ENCODE measurements at regions of chr3 and their contacts with region 1.

Region 1: GRCh38 chr3:190205739-190206138 is 85.0 kb upstream of the P3H2 start:
- DNase-seq: no peak

Region 2: DNA sequence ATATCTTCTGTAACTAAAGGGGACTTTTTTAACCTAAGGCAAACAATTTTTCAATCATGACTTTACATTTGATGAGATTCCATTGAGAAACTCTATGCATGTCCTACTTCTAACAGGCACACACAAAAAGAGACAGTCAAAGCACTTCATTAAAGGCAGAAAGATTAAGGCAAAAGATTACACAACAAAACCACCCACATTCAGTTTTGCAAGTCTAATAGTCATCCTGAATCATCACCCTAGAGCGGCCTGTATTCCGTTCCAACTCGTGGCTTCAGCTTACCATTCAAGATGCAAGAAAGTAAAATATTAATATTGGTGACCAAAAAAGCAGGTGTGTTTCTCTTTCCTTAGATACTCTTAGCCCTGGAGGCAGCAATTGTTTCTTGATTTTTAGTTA is 290.9 kb before region 1 on chr3:
- intact Hi-C with region 1: no loop called
- DNase-seq: no peak

Region 3: GRCh38 chr3:189967254-189967865 is 238.4 kb before region 1 on chr3:
- intact Hi-C with region 1: loop called (anchors 2 kb)
- DNase-seq: no peak

Region 4: DNA sequence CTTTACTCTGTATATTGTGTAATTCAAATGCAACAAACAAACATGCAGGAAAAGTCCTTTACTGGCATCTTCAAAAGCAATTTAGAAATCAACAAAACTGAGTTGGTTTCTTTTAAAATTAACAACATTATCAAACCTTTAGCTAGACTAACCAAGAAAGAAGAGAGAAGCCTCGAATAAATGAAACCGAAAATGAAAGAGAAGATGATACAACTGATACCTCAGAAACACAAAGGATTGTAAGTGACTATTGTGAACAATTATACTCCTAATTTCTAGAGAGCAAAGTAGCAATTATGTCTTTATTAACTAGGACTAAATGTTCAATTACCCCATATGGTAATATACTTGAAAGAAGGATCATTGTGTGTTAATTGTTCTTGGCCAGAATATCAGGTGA is 35.9 kb before region 1 on chr3:
- intact Hi-C with region 1: no loop called
- DNase-seq: no peak

Region 5: GRCh38 chr3:190229632-190230416 is 24.1 kb after region 1 on chr3:
- intact Hi-C with region 1: no loop called
- DNase-seq: no peak

Region 6: GRCh38 chr3:190543671-190544070 is 337.9 kb after region 1 on chr3:
- intact Hi-C with region 1: no loop called
- DNase-seq: no peak

Measured in cardiac septum (tissue), 1 donor.